GM12878 (cell line): ENCODE measurements at regions of chr3 and their contacts with region 1.

Region 1: GRCh38 chr3:112582244-112582874 is 20.5 kb downstream of the SLC35A5 start:
- DNase-seq: no peak
- ATAC-seq: peak; percentile 71
- H3K4me3 ChIP-seq: no peak overlapping the region
- H3K27ac ChIP-seq: no peak overlapping the region
- H3K4me1 ChIP-seq: no peaks in the 10 kb centered on the region
- H3K27me3 ChIP-seq: no peaks in the 10 kb centered on the region
- CTCF ChIP-seq: peak; percentile 55 to 63 (median 60)
- EP300 ChIP-seq: no peak
- POLR2A ChIP-seq: no peak
- RAD21 ChIP-seq: peak; percentile 72

Region 2: GRCh38 chr3:112437146-112438022 is 145.0 kb before region 1 on chr3:
- CTCF ChIA-PET with region 1: no interaction called
- POLR2A ChIA-PET with region 1: no interaction called
- RAD21 ChIA-PET with region 1: no interaction called
- SMC1A ChIA-PET with region 1: no interaction called
- in situ Hi-C with region 1: no loop called
- intact Hi-C with region 1: no loop called
- DNase-seq: no peak
- ATAC-seq: peak; percentile 79
- H3K4me3 ChIP-seq: no peak overlapping the region
- H3K27ac ChIP-seq: no peak overlapping the region
- H3K4me1 ChIP-seq: peaks cover 5% of the 10 kb centered on the region
- H3K27me3 ChIP-seq: no peaks in the 10 kb centered on the region
- CTCF ChIP-seq: peak; percentile 22 to 62 (median 28); a peak in 4 of 6 replicates
- EP300 ChIP-seq: no peak
- POLR2A ChIP-seq: no peak
- RAD21 ChIP-seq: peak; percentile 84

Region 3: DNA sequence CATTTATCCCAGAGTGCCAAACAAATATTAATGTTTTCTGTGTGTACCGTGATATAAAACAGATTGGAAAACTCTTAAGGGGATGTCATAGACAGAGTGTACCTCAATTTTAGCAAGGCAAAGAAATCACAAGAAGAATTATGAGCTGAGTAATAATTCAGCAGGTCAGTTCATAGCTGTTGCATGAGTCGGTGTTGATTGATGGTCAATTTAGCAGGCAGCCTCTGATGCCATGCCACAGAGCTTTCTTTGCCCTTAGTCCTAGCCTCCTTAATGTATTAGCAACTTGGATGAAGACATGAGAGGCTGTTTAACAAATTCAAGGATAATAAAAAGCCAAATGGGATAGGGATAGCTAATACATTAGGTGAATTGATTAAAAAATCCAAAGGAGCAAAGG is 13.7 kb before region 1 on chr3:
- CTCF ChIA-PET with region 1: interaction called, 12 read pairs
- POLR2A ChIA-PET with region 1: no interaction called
- RAD21 ChIA-PET with region 1: interaction called, 6 read pairs
- SMC1A ChIA-PET with region 1: interaction called, 13 read pairs
- in situ Hi-C with region 1: no loop called
- intact Hi-C with region 1: no loop called
- DNase-seq: no peak
- ATAC-seq: no peak
- H3K4me3 ChIP-seq: no peak overlapping the region
- H3K27ac ChIP-seq: no peak overlapping the region
- H3K4me1 ChIP-seq: no peaks in the 10 kb centered on the region
- H3K27me3 ChIP-seq: no peaks in the 10 kb centered on the region
- CTCF ChIP-seq: no peak
- EP300 ChIP-seq: no peak
- POLR2A ChIP-seq: no peak
- RAD21 ChIP-seq: no peak

Region 4: GRCh38 chr3:112604536-112604935 is 22.2 kb after region 1 on chr3:
- CTCF ChIA-PET with region 1: interaction called, 13 read pairs
- POLR2A ChIA-PET with region 1: no interaction called
- RAD21 ChIA-PET with region 1: no interaction called
- SMC1A ChIA-PET with region 1: interaction called, 6 read pairs
- in situ Hi-C with region 1: no loop called
- intact Hi-C with region 1: no loop called
- DNase-seq: no peak
- ATAC-seq: no peak
- H3K4me3 ChIP-seq: no peak overlapping the region
- H3K27ac ChIP-seq: no peak overlapping the region
- H3K4me1 ChIP-seq: peaks cover 16% of the 10 kb centered on the region
- H3K27me3 ChIP-seq: peaks cover 0 to 8% of the 10 kb centered on the region in 2 experiments; a peak in 2 of 4 replicates
- CTCF ChIP-seq: no peak
- EP300 ChIP-seq: no peak
- POLR2A ChIP-seq: no peak
- RAD21 ChIP-seq: no peak

Region 5: DNA sequence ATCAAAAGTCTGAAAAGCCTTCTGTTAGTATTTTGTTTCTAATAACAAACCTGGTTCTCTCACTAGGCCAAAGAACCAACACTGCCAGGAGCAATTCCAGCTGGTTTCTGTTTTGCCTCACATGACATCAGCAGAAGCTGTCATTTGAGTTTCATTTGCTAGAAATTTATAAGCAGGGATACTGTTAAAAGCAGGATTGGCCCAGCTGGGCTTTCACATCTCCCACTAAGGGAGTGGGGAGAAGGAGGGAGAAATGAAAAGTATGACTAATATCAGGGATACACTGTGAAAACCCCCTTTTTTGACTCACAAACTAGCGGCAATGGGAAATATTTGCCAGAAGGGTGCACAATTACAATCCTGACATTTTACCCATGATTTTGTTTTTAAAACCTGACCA is 53.3 kb after region 1 on chr3:
- CTCF ChIA-PET with region 1: interaction called, 18 read pairs
- POLR2A ChIA-PET with region 1: no interaction called
- RAD21 ChIA-PET with region 1: interaction called, 5 read pairs
- SMC1A ChIA-PET with region 1: interaction called, 5 read pairs
- in situ Hi-C with region 1: no loop called
- intact Hi-C with region 1: no loop called
- DNase-seq: no peak
- ATAC-seq: peak; percentile 29; the same call in 2 of the 3 replicates
- H3K4me3 ChIP-seq: no peak overlapping the region
- H3K27ac ChIP-seq: no peak overlapping the region
- H3K4me1 ChIP-seq: peaks cover 7% of the 10 kb centered on the region
- H3K27me3 ChIP-seq: no peaks in the 10 kb centered on the region
- CTCF ChIP-seq: no peak
- EP300 ChIP-seq: no peak
- POLR2A ChIP-seq: no peak
- RAD21 ChIP-seq: no peak

Region 6: GRCh38 chr3:113035387-113035982 is 453.1 kb after region 1 on chr3:
- CTCF ChIA-PET with region 1: interaction called, 11 read pairs
- POLR2A ChIA-PET with region 1: no interaction called
- RAD21 ChIA-PET with region 1: no interaction called
- SMC1A ChIA-PET with region 1: interaction called, 8 read pairs
- in situ Hi-C with region 1: no loop called
- intact Hi-C with region 1: no loop called
- DNase-seq: no peak
- ATAC-seq: peak; percentile 95
- H3K4me3 ChIP-seq: no peak overlapping the region
- H3K27ac ChIP-seq: no peak overlapping the region
- H3K4me1 ChIP-seq: no peaks in the 10 kb centered on the region
- H3K27me3 ChIP-seq: no peaks in the 10 kb centered on the region
- CTCF ChIP-seq: peak; percentile 72 to 92 (median 85)
- EP300 ChIP-seq: no peak
- POLR2A ChIP-seq: no peak
- RAD21 ChIP-seq: peak; percentile 61